ENCODE measurements at regions of chr2 and their contacts with region 1.

Region 1: GRCh38 chr2:30691948-30692828 is 115.1 kb downstream of the CAPN13 start:
- DNase-seq: peak in 1 of 2 donors; percentile 61
- H3K4me3 ChIP-seq: no peak overlapping the region
- H3K27ac ChIP-seq: peak overlapping the region; percentile 91 to 94
- H3K4me1 ChIP-seq: peaks cover 18 to 62% of the 10 kb centered on the region in 2 donors
- H3K27me3 ChIP-seq: no peaks in the 10 kb centered on the region
- CTCF ChIP-seq: peak in 1 of 3 experiments; percentile 7

Region 2: DNA sequence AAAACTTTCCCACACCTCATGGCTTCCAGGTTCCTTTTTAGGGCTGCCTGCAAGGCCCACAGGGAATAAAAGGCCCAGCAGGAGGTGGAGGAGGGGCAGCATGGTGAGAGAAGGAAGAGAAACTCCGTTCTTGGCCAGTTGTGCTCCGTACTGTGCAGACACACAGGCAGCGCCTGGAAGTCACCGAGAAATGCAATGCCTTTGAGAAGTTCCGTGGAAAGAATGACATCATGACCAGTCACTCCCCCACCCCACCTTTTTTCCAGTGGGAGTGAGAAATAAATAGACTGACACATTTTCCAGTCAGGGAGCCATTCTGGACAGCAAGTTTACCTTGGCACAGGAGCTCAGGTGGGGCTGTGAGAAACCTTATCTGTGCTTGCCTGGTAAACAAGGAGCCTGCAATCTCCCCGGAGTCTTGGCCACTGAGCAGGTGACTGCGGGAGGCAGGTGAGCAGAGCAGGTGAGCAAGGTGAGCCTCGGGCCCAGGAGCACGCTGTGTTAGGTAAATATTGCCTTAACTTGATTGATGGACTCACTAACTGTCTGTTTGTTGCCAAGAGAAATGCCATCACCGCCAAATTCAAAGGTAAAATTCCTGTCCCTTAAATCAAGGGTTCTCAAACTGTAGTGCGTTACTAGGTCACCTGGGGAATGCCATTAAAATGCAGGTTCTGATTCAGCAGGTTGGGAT is 474.4 kb before region 1 on chr2:
- intact Hi-C with region 1: loop called (anchors 5 kb)
- DNase-seq: peak; percentile 57 to 90
- H3K4me3 ChIP-seq: peak overlapping the region in 1 of 2 donors; percentile 15
- H3K27ac ChIP-seq: peak overlapping the region; percentile 73 to 82
- H3K4me1 ChIP-seq: peaks cover 6 to 23% of the 10 kb centered on the region in 2 donors
- H3K27me3 ChIP-seq: no peaks in the 10 kb centered on the region
- CTCF ChIP-seq: no peak

Region 3: DNA sequence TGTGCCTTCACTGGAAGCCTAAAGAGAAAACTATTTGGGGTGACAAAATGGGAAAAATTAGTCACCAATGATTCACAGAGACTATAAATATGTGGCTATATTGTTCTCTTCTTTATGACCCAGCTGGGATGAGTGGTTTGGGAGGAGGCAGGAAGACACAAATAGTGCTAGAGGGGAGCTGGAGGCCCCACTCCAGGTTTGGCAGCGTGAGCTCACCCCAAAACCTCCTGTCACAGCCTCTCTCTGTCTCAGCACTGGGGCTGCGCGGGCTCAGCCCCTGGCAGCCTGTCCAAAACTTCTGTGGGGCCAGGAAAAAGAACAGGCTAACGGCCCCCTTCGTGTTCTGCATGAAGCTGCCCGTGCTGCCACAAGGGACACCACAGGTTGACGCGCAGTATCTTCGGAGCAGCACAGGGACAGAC is 318.3 kb before region 1 on chr2:
- intact Hi-C with region 1: loop called (anchors 5 kb)
- DNase-seq: no peak
- H3K4me3 ChIP-seq: no peak overlapping the region
- H3K27ac ChIP-seq: peak overlapping the region; percentile 79 to 84
- H3K4me1 ChIP-seq: peaks cover 0 to 25% of the 10 kb centered on the region in 2 donors
- H3K27me3 ChIP-seq: no peaks in the 10 kb centered on the region
- CTCF ChIP-seq: no peak

Region 4: GRCh38 chr2:30565851-30566358 is 126.3 kb before region 1 on chr2:
- intact Hi-C with region 1: loop called (anchors 5 kb)
- DNase-seq: no peak
- H3K4me3 ChIP-seq: no peak overlapping the region
- H3K27ac ChIP-seq: peak overlapping the region; percentile 61 to 73
- H3K4me1 ChIP-seq: peaks cover 0 to 10% of the 10 kb centered on the region in 2 donors
- H3K27me3 ChIP-seq: no peaks in the 10 kb centered on the region
- CTCF ChIP-seq: no peak

Region 5: DNA sequence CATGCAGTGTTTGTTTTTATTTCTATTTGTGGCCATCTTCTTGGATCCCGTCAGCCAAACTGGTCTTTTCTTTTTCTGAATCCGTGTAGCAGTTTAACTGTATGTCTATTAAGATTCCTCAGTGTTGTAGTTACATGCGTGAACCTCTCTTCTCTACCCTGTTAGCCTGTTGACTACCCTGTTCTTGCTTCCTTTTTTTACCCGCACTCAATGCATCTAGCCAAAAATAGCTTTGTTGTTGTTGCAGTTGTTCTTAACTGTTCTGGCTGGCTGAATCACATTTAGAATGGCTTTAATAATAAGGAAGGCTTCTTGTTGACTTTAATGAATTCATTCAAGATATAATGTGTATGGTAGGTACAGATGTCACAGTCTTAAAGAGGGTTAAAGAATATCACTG is 108.1 kb before region 1 on chr2:
- intact Hi-C with region 1: loop called (anchors 5 kb)
- DNase-seq: no peak
- H3K4me3 ChIP-seq: no peak overlapping the region
- H3K27ac ChIP-seq: peak overlapping the region in 1 of 2 donors; percentile 13
- H3K4me1 ChIP-seq: peaks cover 2 to 19% of the 10 kb centered on the region in 2 donors
- H3K27me3 ChIP-seq: no peaks in the 10 kb centered on the region
- CTCF ChIP-seq: no peak

Measured in ascending aorta (tissue), 2 donors.